ENCODE measurements at regions of chr12 and their contacts with region 1.

Region 1: DNA sequence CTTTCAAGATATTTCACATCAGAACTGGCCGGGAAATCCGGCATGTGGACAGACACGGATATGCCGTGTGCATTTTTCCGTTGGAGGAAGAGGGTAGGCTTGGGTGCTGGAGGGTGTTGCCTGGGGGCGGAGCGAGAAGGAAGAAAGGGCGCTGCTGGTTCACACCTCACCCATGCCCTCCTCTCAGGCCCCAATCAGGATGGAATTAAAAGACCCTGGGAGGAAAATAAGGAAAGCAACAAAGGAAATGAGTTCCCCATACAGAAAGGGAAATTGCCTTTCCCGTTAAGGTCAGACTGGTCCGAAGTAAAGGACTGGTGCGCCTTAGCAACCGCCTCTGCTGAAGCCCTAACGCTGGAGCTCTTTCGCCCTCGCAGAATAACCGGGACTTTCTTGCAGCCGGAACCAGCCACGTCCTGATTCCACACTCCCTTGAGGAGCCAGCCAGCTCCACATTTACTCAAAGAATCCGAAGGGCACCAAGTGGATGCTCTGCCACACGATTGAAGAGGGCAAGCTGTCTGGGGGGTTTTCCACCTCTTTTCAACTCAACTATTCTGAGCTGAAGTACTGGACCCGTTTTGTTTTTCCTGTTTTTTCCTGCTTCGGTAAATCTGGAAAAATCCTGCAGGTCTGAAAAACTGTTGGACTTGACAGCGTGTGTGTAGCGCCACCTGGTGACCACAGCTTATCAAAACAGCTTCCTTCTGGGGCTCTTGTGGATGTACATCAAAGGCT is 37.7 kb upstream of the BCL2L14 start:
- DNase-seq: peak; percentile 44 to 85 (median 74)
- ATAC-seq: peak; percentile 76
- H3K4me3 ChIP-seq: peak overlapping the region; percentile 51 to 54
- H3K4me3 Mint-ChIP-seq: peak overlapping the region; percentile 75
- H3K27ac ChIP-seq: no peak overlapping the region
- H3K27ac Mint-ChIP-seq: peak overlapping the region; percentile 67
- H3K4me1 ChIP-seq: peaks cover 7% of the 10 kb centered on the region
- H3K4me1 Mint-ChIP-seq: peaks cover 18% of the 10 kb centered on the region
- H3K27me3 ChIP-seq: no peaks in the 10 kb centered on the region
- H3K27me3 Mint-ChIP-seq: no peaks in the 10 kb centered on the region
- CTCF ChIP-seq: peak; percentile 92

Region 2: GRCh38 chr12:10771132-10771733 is 1261.8 kb before region 1 on chr12:
- CTCF ChIA-PET with region 1: interaction called, 3 read pairs
- POLR2A ChIA-PET with region 1: no interaction called
- intact Hi-C with region 1: loop called in 1 of 2 experiments (anchors 5 kb)
- DNase-seq: peak in 2 of 9 experiments; percentile 59 to 72
- ATAC-seq: peak; percentile 81
- H3K4me3 ChIP-seq: no peak overlapping the region
- H3K4me3 Mint-ChIP-seq: no peak overlapping the region
- H3K27ac ChIP-seq: no peak overlapping the region
- H3K27ac Mint-ChIP-seq: no peak overlapping the region
- H3K4me1 ChIP-seq: no peaks in the 10 kb centered on the region
- H3K4me1 Mint-ChIP-seq: no peaks in the 10 kb centered on the region
- H3K27me3 ChIP-seq: peaks cover 2 to 5% of the 10 kb centered on the region in 2 experiments
- H3K27me3 Mint-ChIP-seq: peaks cover 39% of the 10 kb centered on the region
- CTCF ChIP-seq: peak; percentile 81

Region 3: GRCh38 chr12:11581179-11581755 is 451.8 kb before region 1 on chr12:
- CTCF ChIA-PET with region 1: interaction called, 241 read pairs
- POLR2A ChIA-PET with region 1: interaction called, 6 read pairs
- intact Hi-C with region 1: loop called (anchors 1 kb)
- DNase-seq: peak; percentile 16 to 81 (median 69)
- ATAC-seq: peak; percentile 26
- H3K4me3 ChIP-seq: no peak overlapping the region
- H3K4me3 Mint-ChIP-seq: no peak overlapping the region
- H3K27ac ChIP-seq: no peak overlapping the region
- H3K27ac Mint-ChIP-seq: no peak overlapping the region
- H3K4me1 ChIP-seq: peaks cover 3% of the 10 kb centered on the region
- H3K4me1 Mint-ChIP-seq: peaks cover 2% of the 10 kb centered on the region
- H3K27me3 ChIP-seq: peaks cover 0 to 5% of the 10 kb centered on the region in 2 experiments
- H3K27me3 Mint-ChIP-seq: peaks cover 2% of the 10 kb centered on the region
- CTCF ChIP-seq: peak; percentile 86

Region 4: DNA sequence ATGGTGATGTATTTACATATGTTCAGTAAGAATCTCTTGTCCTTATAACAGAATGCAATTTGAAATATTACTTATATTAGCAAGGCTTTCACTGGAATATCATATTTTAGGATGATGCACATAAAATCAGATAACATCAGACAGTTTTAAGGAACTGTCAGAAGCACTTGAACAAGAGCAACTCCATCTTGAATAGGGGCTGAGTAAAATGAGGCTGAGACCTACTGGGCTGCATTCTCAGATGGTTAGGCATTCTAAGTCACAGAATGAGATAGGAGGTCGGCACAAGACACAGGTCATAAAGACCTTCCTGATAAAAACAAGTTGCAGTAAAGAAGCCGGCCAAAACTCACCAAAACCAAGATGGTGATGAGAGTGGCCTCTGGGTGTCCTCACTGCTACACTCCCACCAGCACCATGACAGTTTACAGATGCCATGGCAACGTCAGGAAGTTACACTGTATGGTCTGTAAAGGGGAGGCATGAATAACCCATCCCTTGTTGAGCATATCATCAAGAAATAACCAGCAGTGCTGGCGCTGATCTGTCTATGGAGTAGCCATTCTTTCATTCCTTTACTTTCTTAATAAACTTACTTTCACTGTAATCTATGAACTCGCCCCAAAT is 411.1 kb before region 1 on chr12:
- CTCF ChIA-PET with region 1: interaction called, 47 read pairs
- POLR2A ChIA-PET with region 1: no interaction called
- intact Hi-C with region 1: loop called in 1 of 2 experiments (anchors 1 kb)
- DNase-seq: peak in 7 of 9 experiments; percentile 2 to 62 (median 24)
- ATAC-seq: no peak
- H3K4me3 ChIP-seq: no peak overlapping the region
- H3K4me3 Mint-ChIP-seq: no peak overlapping the region
- H3K27ac ChIP-seq: no peak overlapping the region
- H3K27ac Mint-ChIP-seq: no peak overlapping the region
- H3K4me1 ChIP-seq: no peaks in the 10 kb centered on the region
- H3K4me1 Mint-ChIP-seq: no peaks in the 10 kb centered on the region
- H3K27me3 ChIP-seq: no peaks in the 10 kb centered on the region
- H3K27me3 Mint-ChIP-seq: no peaks in the 10 kb centered on the region
- CTCF ChIP-seq: no peak

Region 5: DNA sequence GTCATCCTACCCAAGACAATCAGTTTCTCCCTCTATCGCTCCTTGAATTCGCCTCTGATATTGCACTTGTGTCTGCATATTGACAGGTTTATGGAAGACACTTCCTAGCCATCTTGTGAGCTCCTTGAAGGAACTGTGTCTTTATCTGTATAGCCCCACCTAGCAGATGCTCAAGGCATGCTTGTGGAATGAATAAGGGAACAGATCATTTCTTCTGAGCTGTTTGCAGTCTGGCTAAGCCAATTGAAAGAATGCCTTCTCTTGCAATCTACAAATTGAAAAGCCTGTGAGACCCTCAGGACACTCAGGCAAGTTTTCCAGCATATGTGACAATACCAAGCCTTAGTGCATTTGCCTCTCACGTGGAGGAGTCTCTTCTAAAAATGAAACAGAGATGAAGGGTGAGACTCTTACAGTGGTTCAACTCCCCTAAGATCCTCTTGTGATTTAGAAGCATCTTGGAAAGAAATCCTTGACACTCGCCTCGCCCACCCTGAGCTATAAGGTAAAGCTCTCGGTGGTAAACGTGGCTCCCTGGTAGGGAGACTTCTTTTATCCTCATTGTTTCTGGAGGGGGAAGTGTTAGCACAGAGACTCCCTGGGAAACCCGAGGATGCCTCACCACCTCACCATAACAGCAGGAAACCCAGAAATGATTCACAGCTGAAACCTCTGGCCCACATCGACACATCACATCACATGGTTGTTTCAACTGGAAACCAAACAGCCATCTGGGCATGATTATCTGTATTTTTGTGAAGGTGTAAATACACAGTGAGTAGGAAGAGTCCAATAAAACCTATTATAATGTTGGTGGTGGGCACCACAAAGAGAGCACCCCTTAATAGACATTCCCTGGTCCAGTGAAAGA is 74.6 kb before region 1 on chr12:
- CTCF ChIA-PET with region 1: interaction called, 4 read pairs
- POLR2A ChIA-PET with region 1: no interaction called
- intact Hi-C with region 1: loop called in 1 of 2 experiments (anchors 5 kb)
- DNase-seq: peak in 5 of 9 experiments; percentile 11 to 43 (median 33)
- ATAC-seq: peak; percentile 31
- H3K4me3 ChIP-seq: no peak overlapping the region
- H3K4me3 Mint-ChIP-seq: no peak overlapping the region
- H3K27ac ChIP-seq: no peak overlapping the region
- H3K27ac Mint-ChIP-seq: no peak overlapping the region
- H3K4me1 ChIP-seq: no peaks in the 10 kb centered on the region
- H3K4me1 Mint-ChIP-seq: peaks cover 12% of the 10 kb centered on the region
- H3K27me3 ChIP-seq: no peaks in the 10 kb centered on the region
- H3K27me3 Mint-ChIP-seq: peaks cover 9% of the 10 kb centered on the region
- CTCF ChIP-seq: no peak

Region 6: DNA sequence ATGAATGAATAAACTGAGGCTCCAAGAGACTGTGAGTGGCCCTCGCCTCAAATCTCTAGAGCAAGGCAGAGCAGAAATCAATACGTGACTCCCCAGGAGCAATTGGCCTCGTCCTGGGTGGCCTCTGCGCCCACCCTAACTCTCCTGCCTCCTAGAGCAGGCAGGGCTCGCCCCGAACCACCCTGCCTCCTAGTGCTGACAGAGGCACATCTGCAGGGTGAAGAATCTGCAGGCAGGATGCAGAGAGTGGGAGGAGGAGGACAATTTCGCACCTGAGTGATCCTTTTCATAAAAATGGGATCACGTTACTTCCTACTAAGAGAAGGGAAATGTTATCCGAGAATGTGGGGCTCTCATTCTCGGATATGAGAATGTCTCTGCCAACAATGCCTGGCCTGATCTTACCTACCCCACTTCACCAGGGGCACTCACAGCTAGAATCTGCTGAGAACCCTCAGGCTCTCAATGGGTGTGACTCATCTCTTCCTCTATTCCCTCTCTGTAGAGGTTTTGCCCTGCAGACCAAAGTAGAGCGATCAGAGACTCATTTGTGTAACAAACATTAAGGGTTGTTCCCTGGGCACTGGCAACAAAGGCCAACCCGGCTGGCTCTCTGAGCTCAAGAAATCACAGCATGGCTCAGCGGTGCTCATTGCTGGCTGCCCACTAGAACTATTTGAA is 23.9 kb before region 1 on chr12:
- CTCF ChIA-PET with region 1: interaction called, 33 read pairs
- POLR2A ChIA-PET with region 1: no interaction called
- intact Hi-C with region 1: loop called in 1 of 2 experiments (anchors 1 kb)
- DNase-seq: peak in 7 of 9 experiments; percentile 15 to 71 (median 52)
- ATAC-seq: peak; percentile 66
- H3K4me3 ChIP-seq: no peak overlapping the region
- H3K4me3 Mint-ChIP-seq: peak overlapping the region; percentile 79
- H3K27ac ChIP-seq: no peak overlapping the region
- H3K27ac Mint-ChIP-seq: peak overlapping the region; percentile 88
- H3K4me1 ChIP-seq: peaks cover 48% of the 10 kb centered on the region
- H3K4me1 Mint-ChIP-seq: peaks cover 62% of the 10 kb centered on the region
- H3K27me3 ChIP-seq: peaks cover 0 to 9% of the 10 kb centered on the region in 2 experiments
- H3K27me3 Mint-ChIP-seq: no peaks in the 10 kb centered on the region
- CTCF ChIP-seq: peak; percentile 10

Region 7: DNA sequence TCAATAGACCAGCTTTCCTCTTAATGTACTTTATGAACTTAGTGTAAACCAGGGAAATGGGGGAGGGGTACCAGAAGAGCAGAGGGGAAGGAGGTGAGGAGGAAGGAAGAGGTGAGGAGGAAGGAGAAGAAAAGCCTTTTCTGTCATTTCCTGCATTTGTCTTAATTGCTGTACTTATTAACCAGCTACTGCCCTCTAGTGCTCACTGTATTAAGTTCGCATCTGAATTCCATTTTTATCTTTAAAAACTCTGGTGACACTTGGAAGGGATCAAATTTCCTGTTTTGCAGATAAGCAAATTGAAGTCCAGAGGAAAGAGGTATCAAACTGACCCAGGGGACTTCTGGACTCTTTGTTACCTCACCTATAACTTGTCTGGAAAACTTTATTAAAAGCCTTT is 294.8 kb after region 1 on chr12:
- CTCF ChIA-PET with region 1: interaction called, 4 read pairs
- POLR2A ChIA-PET with region 1: no interaction called
- intact Hi-C with region 1: loop called in 1 of 2 experiments (anchors 10 kb)
- DNase-seq: peak in 5 of 9 experiments; percentile 4 to 78 (median 25)
- ATAC-seq: peak; percentile 63
- H3K4me3 ChIP-seq: no peak overlapping the region
- H3K4me3 Mint-ChIP-seq: no peak overlapping the region
- H3K27ac ChIP-seq: no peak overlapping the region
- H3K27ac Mint-ChIP-seq: peak overlapping the region; percentile 63
- H3K4me1 ChIP-seq: peaks cover 10% of the 10 kb centered on the region
- H3K4me1 Mint-ChIP-seq: peaks cover 8% of the 10 kb centered on the region
- H3K27me3 ChIP-seq: no peaks in the 10 kb centered on the region
- H3K27me3 Mint-ChIP-seq: peaks cover 2% of the 10 kb centered on the region
- CTCF ChIP-seq: peak; percentile 85

Region 8: DNA sequence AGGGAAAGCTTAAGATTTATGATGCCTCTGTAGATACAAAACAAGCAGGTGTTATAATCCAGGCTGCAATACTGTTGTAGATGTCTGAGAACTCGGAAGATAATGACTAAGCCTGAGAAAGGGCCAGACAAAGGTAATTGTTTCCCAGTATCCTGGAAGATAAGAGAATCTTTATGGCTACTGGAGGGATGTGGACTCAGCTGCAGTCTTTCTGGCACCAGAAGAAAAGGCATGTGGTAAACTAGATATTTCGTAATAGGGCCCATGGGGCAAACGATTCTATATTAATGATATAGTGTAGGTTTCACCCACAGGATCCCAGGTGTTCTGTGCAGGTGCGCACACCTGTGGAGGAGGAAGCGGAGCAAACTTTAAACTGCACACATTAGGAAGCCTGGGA is 743.2 kb after region 1 on chr12:
- CTCF ChIA-PET with region 1: no interaction called
- POLR2A ChIA-PET with region 1: no interaction called
- intact Hi-C with region 1: no loop called
- DNase-seq: no peak
- ATAC-seq: no peak
- H3K4me3 ChIP-seq: no peak overlapping the region
- H3K4me3 Mint-ChIP-seq: no peak overlapping the region
- H3K27ac ChIP-seq: no peak overlapping the region
- H3K27ac Mint-ChIP-seq: no peak overlapping the region
- H3K4me1 ChIP-seq: no peaks in the 10 kb centered on the region
- H3K4me1 Mint-ChIP-seq: no peaks in the 10 kb centered on the region
- H3K27me3 ChIP-seq: no peaks in the 10 kb centered on the region
- H3K27me3 Mint-ChIP-seq: no peaks in the 10 kb centered on the region
- CTCF ChIP-seq: no peak

Measured in CD8-positive, alpha-beta T cell (primary cell).